ENCODE measurements at regions of chr11 and their contacts with region 1.

Region 1: GRCh38 chr11:27183672-27184457 is 143.2 kb downstream of the BBOX1 start:
- DNase-seq: peak; percentile 53 to 85 (median 66)
- H3K4me3 ChIP-seq: no peak overlapping the region
- H3K27ac ChIP-seq: no peak overlapping the region
- H3K4me1 ChIP-seq: peaks cover 10 to 12% of the 10 kb centered on the region in 2 donors
- H3K27me3 ChIP-seq: no peaks in the 10 kb centered on the region
- CTCF ChIP-seq: peak; percentile 76 to 91 (median 85)
- POLR2A ChIP-seq: no peak

Region 2: DNA sequence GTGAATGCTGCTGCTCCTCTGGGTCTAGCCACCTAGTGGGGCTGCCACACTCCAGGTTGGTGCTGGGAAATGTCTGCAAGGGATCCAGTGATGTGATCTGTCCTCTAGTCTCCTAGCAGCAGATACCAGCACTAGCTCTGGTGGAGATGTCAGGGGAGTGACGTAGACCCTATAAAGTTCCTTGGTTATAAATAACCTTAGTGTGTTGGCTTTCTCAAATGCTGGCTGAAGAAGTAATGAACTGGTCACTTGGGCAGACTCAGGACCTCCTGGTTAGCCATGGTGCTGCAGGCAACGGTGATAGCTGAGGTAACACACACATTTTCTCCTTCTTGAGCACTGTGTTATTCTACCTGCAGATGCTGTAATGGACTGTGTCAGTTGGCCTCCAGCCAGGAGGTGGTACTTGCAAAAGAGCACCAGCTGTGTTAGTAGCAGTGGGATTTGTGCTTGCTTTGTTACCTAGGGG is 107.7 kb before region 1 on chr11:
- intact Hi-C with region 1: no loop called
- DNase-seq: no peak
- H3K4me3 ChIP-seq: no peak overlapping the region
- H3K27ac ChIP-seq: no peak overlapping the region
- H3K4me1 ChIP-seq: no peaks in the 10 kb centered on the region
- H3K27me3 ChIP-seq: peaks cover 5% of the 10 kb centered on the region
- CTCF ChIP-seq: no peak
- POLR2A ChIP-seq: no peak

Region 3: GRCh38 chr11:27234043-27234668 is 50.3 kb after region 1 on chr11:
- intact Hi-C with region 1: loop called in 1 of 2 experiments (anchors 10 kb)
- DNase-seq: peak; percentile 33 to 83 (median 76)
- H3K4me3 ChIP-seq: no peak overlapping the region
- H3K27ac ChIP-seq: peak overlapping the region; percentile 17 to 89 (median 83)
- H3K4me1 ChIP-seq: peaks cover 8 to 13% of the 10 kb centered on the region in 2 donors
- H3K27me3 ChIP-seq: no peaks in the 10 kb centered on the region
- CTCF ChIP-seq: peak in 3 of 6 experiments; percentile 33 to 35 (median 33)
- POLR2A ChIP-seq: peak in 1 of 2 donors; percentile 21

Region 4: DNA sequence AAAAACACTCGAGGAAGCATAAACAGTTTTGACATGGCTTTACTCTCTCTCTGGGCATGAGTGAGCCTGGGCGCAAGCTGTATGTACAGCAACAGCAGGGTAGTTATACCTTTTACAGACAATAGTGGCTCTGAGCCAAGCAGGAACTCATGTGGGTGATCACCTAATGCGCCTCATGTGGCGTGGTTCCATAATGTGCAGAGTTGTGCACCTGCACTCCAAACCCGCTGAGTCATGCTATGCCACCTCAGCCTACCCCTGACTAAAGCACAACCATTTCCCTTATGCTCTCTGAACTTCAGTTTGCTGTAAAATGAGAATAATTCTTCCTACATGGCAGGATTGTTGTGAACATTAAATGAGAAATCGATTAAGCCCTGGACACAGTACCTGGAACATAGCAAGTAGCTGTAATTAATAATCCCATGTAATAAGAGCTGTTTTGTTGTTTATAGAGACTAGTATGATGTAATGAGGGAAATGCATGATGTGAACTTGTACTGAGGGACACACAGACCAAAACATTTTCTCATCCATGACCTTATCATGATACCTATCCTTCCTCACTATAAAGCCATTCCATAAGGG is 107.5 kb after region 1 on chr11:
- intact Hi-C with region 1: loop called in 1 of 2 experiments (anchors 5 kb)
- DNase-seq: peak in 1 of 7 donors; percentile 19
- H3K4me3 ChIP-seq: no peak overlapping the region
- H3K27ac ChIP-seq: no peak overlapping the region
- H3K4me1 ChIP-seq: no peaks in the 10 kb centered on the region
- H3K27me3 ChIP-seq: no peaks in the 10 kb centered on the region
- CTCF ChIP-seq: no peak
- POLR2A ChIP-seq: no peak

Region 5: DNA sequence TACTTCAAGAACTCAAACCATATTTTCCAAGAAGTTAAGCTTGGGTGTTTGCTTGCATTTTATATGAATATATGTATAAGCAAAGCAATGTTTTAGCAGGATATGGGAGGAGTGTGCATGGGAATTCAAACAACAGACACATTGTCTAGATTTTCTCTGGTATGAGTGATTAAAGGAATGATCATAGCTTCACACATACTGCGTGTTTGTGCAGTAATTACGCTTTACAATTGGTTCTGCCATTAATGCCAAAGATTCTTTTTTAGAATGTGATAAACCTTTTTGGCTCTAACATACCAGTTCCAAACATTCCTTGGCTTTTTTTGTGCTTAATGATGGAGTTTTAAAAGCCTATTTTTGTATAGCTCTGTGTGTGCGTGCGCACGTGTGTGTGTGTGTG is 125.2 kb after region 1 on chr11:
- intact Hi-C with region 1: loop called in 1 of 2 experiments (anchors 5 kb)
- DNase-seq: no peak
- H3K4me3 ChIP-seq: no peak overlapping the region
- H3K27ac ChIP-seq: no peak overlapping the region
- H3K4me1 ChIP-seq: no peaks in the 10 kb centered on the region
- H3K27me3 ChIP-seq: no peaks in the 10 kb centered on the region
- CTCF ChIP-seq: no peak
- POLR2A ChIP-seq: no peak

Region 6: GRCh38 chr11:27362749-27363575 is 179.1 kb after region 1 on chr11 and contains the start of gene CCDC34:
- intact Hi-C with region 1: loop called in 1 of 2 experiments (anchors 10 kb)
- DNase-seq: peak; percentile 90 to 95 (median 92)
- H3K4me3 ChIP-seq: peak within 1 kb of the TSS; percentile 46 to 96 (median 64)
- H3K27ac ChIP-seq: peak within 1 kb of the TSS in 2 of 5 donors; percentile 23 to 70
- H3K4me1 ChIP-seq: peaks cover 0 to 17% of the 10 kb centered on the region in 2 donors
- H3K27me3 ChIP-seq: no peaks in the 10 kb centered on the region
- CTCF ChIP-seq: no peak
- POLR2A ChIP-seq: peak in 1 of 2 donors; percentile 38
- total RNA-seq, gene CCDC34: 2.5 to 12.1 (median 4.4) TPM

Region 7: GRCh38 chr11:27485930-27486773 is 302.3 kb after region 1 on chr11:
- intact Hi-C with region 1: loop called (anchors 5 kb)
- DNase-seq: peak in 4 of 7 donors; percentile 22 to 65 (median 62)
- H3K4me3 ChIP-seq: no peak overlapping the region
- H3K27ac ChIP-seq: no peak overlapping the region
- H3K4me1 ChIP-seq: peaks cover 0 to 3% of the 10 kb centered on the region in 2 donors
- H3K27me3 ChIP-seq: no peaks in the 10 kb centered on the region
- CTCF ChIP-seq: peak; percentile 89 to 99 (median 94)
- POLR2A ChIP-seq: no peak

Measured in adrenal gland (tissue), 19 donors.